Endothelial cell of umbilical vein (primary cell): ENCODE measurements at regions of chr14 and their contacts with region 1.

Region 1: DNA sequence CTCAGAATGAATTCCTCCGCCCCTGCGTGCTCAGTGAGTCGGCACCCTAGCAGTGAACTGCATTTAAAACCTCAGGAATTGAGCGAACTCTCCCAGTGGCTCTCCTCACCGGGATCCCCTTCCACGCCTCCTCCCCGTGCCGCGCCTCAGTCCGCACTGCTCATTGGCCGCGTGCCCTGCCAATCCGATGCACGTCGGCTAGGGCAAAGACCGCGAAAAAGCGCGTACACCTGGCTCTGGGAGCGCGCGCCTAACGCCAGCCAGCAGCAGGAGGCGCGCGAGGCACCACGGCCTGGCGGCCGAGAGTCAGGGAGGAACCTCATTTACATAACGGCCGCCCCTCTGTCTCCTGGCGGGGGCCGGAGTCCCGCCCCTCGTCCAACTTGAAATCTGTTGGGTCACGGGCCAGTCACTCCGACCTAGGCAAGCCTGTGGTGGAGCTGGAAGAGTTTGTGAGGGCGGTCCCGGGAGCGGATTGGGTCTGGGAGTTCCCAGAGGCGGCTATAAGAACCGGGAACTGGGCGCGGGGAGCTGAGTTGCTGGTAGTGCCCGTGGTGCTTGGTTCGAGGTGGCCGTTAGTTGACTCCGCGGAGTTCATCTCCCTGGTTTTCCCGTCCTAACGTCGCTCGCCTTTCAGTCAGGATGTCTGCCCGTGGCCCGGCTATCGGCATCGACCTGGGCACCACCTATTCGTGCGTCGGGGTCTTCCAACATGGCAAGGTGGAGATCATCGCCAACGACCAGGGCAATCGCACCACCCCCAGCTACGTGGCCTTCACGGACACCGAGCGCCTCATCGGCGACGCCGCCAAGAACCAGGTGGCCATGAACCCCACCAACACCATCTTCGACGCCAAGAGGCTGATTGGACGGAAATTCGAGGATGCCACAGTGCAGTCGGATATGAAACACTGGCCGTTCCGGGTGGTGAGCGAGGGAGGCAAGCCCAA is at the start of gene HSPA2:
- DNase-seq: peak; percentile 100
- H3K4me3 ChIP-seq: peak within 1 kb of the TSS; percentile 50 to 68 (median 64)
- H3K27ac ChIP-seq: peak within 1 kb of the TSS; percentile 38
- H3K4me1 ChIP-seq: peaks cover 25% of the 10 kb centered on the region
- H3K27me3 ChIP-seq: peaks cover 26 to 29% of the 10 kb centered on the region in 2 experiments
- CTCF ChIP-seq: peak; percentile 86 to 95
- POLR2A ChIP-seq: peak; percentile 74
- total RNA-seq, gene HSPA2: 8.2 and 11.4 TPM in 2 replicates

Region 2: GRCh38 chr14:64387694-64388532 is 152.6 kb before region 1 on chr14 and contains the start of gene MTHFD1:
- CTCF ChIA-PET with region 1: interaction called, 3 read pairs
- POLR2A ChIA-PET with region 1: interaction called, 12 read pairs
- dilution Hi-C with region 1: no loop called
- intact Hi-C with region 1: no loop called
- DNase-seq: peak; percentile 99
- H3K4me3 ChIP-seq: peak within 1 kb of the TSS; percentile 56 to 94 (median 88)
- H3K27ac ChIP-seq: peak within 1 kb of the TSS; percentile 68
- H3K4me1 ChIP-seq: peaks cover 16% of the 10 kb centered on the region
- H3K27me3 ChIP-seq: no peaks in the 10 kb centered on the region
- CTCF ChIP-seq: no peak
- POLR2A ChIP-seq: peak; percentile 48
- total RNA-seq, gene MTHFD1: 104 and 114 TPM in 2 replicates

Region 3: GRCh38 chr14:64503478-64504309 is 36.8 kb before region 1 on chr14 and contains the start of gene ZBTB25:
- CTCF ChIA-PET with region 1: no interaction called
- POLR2A ChIA-PET with region 1: interaction called, 11 read pairs
- dilution Hi-C with region 1: no loop called
- intact Hi-C with region 1: loop called (anchors 1 kb)
- DNase-seq: peak; percentile 95
- H3K4me3 ChIP-seq: peak within 1 kb of the TSS; percentile 71 to 97 (median 93)
- H3K27ac ChIP-seq: peak within 1 kb of the TSS; percentile 95
- H3K4me1 ChIP-seq: peaks cover 38% of the 10 kb centered on the region
- H3K27me3 ChIP-seq: no peaks in the 10 kb centered on the region
- CTCF ChIP-seq: no peak
- POLR2A ChIP-seq: peak; percentile 84
- total RNA-seq, gene ZBTB25: 6.4 and 7.7 TPM in 2 replicates

Region 4: DNA sequence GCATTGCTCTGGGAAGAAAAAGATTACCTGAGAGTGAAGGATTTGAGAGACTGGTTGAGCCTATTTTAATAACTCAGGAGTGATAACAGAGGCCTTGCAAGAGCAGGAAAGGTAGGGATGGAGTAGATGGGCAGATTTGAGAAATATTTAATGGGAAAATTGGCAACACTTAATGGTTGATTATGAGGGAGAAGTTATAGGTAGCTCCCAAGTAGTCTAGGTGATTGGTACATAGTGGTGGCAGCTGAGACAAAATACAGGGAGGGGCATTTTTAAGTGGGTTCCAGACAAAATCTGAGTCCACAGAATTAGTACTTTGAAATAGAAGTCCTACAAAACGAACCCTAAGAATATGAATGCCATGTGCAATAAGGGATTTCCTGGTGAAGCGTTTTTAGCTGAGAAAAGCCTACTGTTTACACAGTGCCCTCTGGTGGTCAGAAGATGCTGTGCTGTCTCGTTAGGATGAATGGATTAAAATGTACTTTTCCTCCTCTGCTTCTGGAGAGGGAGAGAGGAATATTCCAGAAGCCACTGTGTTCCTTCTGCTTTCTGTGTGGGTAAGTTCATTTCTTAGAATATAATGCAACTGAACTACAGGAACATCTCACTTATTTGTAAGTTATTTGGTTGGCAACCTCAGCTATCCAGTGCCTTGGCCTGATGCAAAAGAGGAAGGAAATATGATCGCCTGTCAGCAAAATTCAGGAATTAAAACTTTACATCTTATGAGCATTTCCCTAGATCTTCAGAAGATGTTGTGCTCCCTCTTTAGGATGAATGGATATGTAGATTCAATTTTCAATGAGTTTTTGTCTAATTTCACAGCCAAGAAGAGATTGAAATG is 29.4 kb before region 1 on chr14:
- CTCF ChIA-PET with region 1: interaction called, 14 read pairs
- POLR2A ChIA-PET with region 1: no interaction called
- dilution Hi-C with region 1: no loop called
- intact Hi-C with region 1: no loop called
- DNase-seq: peak; percentile 72
- H3K4me3 ChIP-seq: no peak overlapping the region
- H3K27ac ChIP-seq: no peak overlapping the region
- H3K4me1 ChIP-seq: peaks cover 21% of the 10 kb centered on the region
- H3K27me3 ChIP-seq: no peaks in the 10 kb centered on the region
- CTCF ChIP-seq: peak; percentile 78 to 84
- POLR2A ChIP-seq: no peak

Region 5: DNA sequence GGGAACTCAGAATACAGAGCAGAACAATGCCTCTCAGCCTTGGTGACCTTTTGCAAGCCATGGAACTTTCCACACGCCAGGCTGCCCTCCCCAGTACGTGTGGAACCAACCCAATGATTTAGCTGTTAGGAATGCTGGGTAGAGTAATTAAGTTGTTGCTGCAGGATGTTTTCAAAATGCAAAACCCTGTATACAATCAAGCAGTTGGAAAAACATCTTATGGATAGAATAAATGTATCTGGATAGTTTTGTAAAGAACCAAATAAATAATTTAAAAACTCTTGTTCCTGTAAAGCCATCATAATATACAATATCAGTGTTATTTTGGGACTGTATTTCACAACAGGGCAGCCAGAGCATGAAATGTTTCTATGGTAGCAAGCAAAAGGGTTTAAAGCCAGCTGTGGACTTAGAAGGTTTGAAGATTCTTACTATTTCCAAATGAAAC is 28.7 kb after region 1 on chr14:
- CTCF ChIA-PET with region 1: interaction called, 5 read pairs
- POLR2A ChIA-PET with region 1: no interaction called
- dilution Hi-C with region 1: no loop called
- intact Hi-C with region 1: loop called (anchors 1 kb)
- DNase-seq: peak; percentile 91
- H3K4me3 ChIP-seq: no peak overlapping the region
- H3K27ac ChIP-seq: no peak overlapping the region
- H3K4me1 ChIP-seq: peaks cover 33% of the 10 kb centered on the region
- H3K27me3 ChIP-seq: no peaks in the 10 kb centered on the region
- CTCF ChIP-seq: no peak
- POLR2A ChIP-seq: no peak

Region 6: GRCh38 chr14:64764641-64765520 is 224.4 kb after region 1 on chr14:
- CTCF ChIA-PET with region 1: interaction called, 3 read pairs
- POLR2A ChIA-PET with region 1: no interaction called
- dilution Hi-C with region 1: no loop called
- intact Hi-C with region 1: loop called (anchors 5 kb)
- DNase-seq: peak; percentile 74
- H3K4me3 ChIP-seq: no peak overlapping the region
- H3K27ac ChIP-seq: peak overlapping the region; percentile 30
- H3K4me1 ChIP-seq: peaks cover 21% of the 10 kb centered on the region
- H3K27me3 ChIP-seq: no peaks in the 10 kb centered on the region
- CTCF ChIP-seq: peak; percentile 80 to 97
- POLR2A ChIP-seq: no peak